ENCODE measurements at regions of chr2 and their contacts with region 1.

Region 1: GRCh38 chr2:176653479-176654443 is 384.5 kb downstream of the MTX2 start:
- DNase-seq: peak; percentile 75
- H3K4me3 Mint-ChIP-seq: no peak overlapping the region
- H3K27ac Mint-ChIP-seq: no peak overlapping the region
- H3K4me1 Mint-ChIP-seq: no peaks in the 10 kb centered on the region
- H3K27me3 Mint-ChIP-seq: peaks cover 31% of the 10 kb centered on the region
- CTCF ChIP-seq: peak; percentile 82

Region 2: DNA sequence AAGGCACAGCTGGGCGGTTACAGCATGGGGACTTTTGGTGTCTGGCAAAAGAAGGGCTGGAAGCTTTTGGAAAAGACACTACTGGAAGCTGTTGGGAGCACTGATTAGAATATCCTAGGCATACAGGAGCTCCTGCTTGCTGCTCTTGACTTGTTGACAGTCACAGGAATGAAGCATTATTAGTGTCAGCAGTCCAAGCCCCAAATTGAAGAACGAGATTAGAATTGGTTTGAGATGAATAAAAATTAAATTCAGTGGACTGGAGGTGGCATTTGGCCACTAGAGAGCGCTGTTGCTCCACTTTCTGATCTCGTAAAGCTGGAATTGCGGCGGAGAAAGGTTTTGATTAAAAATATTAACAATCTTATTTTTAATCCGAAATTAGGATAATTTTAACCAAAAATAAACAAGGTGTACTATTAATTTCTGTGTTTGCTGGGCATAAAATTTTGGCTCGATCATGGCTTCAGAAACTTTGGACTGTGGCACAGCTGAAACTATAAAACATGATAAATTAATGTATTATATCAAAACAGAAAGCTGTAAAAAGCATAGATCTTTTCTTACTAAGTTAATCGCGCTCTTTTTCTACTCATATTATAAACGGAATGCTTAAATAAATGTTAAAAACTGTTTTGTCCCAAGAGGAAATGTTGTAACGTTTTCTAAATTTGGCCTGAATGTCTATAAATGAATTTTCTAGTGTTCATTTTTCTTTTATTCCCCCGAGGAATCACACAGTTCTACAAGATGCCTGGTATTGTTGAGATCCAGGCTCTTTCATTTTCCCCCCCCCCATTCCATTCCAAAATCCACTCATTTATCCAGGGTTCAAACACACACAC is 526.6 kb before region 1 on chr2:
- CTCF ChIA-PET with region 1: interaction called, 16 read pairs
- intact Hi-C with region 1: loop called (anchors 1 kb)
- DNase-seq: peak; percentile 60
- H3K4me3 Mint-ChIP-seq: no peak overlapping the region
- H3K27ac Mint-ChIP-seq: no peak overlapping the region
- H3K4me1 Mint-ChIP-seq: no peaks in the 10 kb centered on the region
- H3K27me3 Mint-ChIP-seq: no peaks in the 10 kb centered on the region
- CTCF ChIP-seq: peak; percentile 73

Region 3: DNA sequence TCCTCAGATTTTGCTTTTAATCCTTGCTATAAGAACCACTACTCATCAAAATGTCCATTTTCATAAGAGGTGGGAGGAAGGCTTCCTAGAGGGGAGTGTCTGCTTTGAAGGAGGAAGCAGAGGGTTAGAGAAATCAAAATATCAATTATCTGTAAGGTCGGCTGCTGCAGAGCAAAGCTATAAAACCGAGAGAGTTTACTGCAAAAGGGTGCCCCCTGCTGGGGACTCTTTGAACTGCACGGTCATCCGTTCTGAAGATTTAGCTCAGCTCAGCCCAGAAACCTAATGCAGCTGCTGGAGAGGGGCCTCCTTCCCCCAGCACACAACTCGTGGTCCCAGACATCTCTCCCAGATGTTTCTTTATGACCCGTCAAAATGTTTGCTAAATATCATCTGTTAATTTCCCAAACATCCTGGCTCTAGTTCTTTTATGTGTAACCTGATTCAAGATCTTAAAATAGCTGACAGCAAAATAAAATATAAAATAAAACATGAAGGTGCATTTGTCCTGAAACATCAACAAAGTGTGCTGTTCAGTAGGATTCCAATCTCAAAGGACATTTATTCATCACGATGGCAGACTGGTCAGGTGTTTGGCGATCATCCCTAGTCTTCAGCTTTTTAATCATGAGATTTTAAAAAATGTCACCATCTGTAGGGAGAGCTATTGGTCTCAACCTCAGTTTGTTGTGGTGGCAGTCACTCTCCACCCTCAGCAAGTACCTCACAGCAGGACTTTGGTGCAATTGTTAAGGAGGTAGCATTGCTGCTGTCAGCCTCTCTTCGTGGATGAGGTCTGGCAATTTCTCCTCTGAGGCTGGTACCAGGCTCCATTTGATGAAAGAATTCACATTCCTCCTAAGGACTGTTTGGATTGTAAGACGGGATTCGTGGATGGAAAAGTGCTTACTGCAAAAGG is 198.6 kb before region 1 on chr2:
- CTCF ChIA-PET with region 1: interaction called, 13 read pairs
- intact Hi-C with region 1: loop called (anchors 5 kb)
- DNase-seq: peak; percentile 90
- H3K4me3 Mint-ChIP-seq: no peak overlapping the region
- H3K27ac Mint-ChIP-seq: no peak overlapping the region
- H3K4me1 Mint-ChIP-seq: no peaks in the 10 kb centered on the region
- H3K27me3 Mint-ChIP-seq: no peaks in the 10 kb centered on the region
- CTCF ChIP-seq: peak; percentile 94

Region 4: GRCh38 chr2:176664478-176664877 is 10.7 kb after region 1 on chr2:
- CTCF ChIA-PET with region 1: interaction called, 14 read pairs
- intact Hi-C with region 1: no loop called
- DNase-seq: peak; percentile 6
- H3K4me3 Mint-ChIP-seq: no peak overlapping the region
- H3K27ac Mint-ChIP-seq: no peak overlapping the region
- H3K4me1 Mint-ChIP-seq: peaks cover 14% of the 10 kb centered on the region
- H3K27me3 Mint-ChIP-seq: peaks cover under 1% of the 10 kb centered on the region
- CTCF ChIP-seq: no peak

Region 5: DNA sequence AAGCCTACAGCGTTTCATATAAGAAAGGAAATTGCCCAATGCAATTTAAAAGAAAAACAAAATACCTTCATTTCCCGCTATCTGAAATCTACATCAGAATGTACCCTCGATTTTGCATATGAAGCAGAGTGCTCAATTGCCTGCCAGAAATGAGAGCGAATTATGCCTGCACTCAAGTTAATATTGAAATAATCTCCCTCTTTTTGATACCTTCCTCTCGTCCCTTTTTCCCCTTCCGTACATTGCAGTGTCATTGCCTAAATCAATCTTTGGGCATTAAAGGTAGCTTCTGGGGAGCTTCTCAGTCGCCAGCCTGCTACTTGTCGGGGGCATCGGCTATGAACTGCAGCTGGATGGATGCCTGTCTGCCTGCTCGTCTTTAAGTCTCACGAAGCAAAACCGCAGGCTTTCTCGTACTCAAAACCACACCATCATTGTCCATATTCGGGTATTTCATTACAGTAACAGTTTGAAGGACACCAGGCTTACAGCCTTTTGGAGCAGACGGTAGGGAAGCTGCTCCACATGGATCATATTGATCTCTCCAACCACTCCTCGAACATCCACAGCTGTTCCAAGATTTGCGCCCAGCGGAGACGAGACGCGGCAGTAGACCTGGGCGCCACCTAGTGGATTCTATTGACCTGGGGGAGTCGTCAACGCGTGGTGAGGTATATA is 494.9 kb after region 1 on chr2:
- CTCF ChIA-PET with region 1: interaction called, 13 read pairs
- intact Hi-C with region 1: loop called (anchors 2 kb)
- DNase-seq: peak; percentile 89
- H3K4me3 Mint-ChIP-seq: peak overlapping the region; percentile 67
- H3K27ac Mint-ChIP-seq: peak overlapping the region; percentile 4
- H3K4me1 Mint-ChIP-seq: peaks cover 10% of the 10 kb centered on the region
- H3K27me3 Mint-ChIP-seq: peaks cover 9% of the 10 kb centered on the region
- CTCF ChIP-seq: peak; percentile 83